ENCODE measurements at regions of chr6 and their contacts with region 1.

Region 1: DNA sequence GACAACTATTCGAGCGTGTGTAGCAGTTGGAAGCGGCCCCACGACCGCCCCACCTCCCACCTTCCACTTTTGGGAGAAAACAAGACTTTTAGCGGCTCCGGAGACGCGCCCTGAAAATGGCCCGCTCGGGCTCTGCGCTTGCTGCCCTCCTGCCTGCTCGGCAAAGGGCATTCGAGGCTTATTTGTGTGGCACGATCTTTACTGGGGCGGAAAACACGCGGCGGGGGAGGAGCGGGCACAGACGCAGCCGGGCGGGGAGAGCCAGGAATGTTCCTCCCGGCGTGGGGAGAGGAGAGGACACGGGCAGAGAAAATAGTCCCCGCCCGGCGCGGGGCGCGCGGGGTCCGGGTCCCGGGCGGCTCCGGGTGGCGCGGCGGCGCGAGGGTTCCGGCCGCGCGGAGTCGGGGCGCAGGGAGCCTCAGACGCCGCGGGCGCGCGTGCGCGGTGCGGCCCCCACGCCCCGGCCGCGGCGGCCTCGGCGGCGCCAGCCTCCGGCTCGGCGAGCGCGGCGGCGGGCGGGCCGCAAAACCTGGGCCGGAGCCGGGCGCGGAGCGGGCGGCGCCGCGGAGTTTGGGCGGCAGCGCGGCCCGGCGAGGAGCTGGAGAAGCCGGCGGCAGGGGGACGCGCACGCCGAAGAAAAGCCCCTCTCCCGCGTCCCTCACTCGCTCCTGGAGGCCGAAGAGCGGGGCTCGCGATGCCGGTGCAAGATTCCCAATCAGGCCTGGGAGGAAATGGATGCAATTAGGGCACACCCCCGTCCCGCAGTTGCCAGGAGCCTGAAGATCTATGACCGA is 90.0 kb upstream of the ARID1B start:
- DNase-seq: peak; percentile 60 to 92 (median 73)
- ATAC-seq: peak; percentile 83
- H3K4me3 ChIP-seq: peak overlapping the region; percentile 92 to 93
- H3K4me3 Mint-ChIP-seq: peak overlapping the region; percentile 89
- H3K27ac ChIP-seq: peak overlapping the region; percentile 89 to 95
- H3K27ac Mint-ChIP-seq: peak overlapping the region; percentile 97
- H3K4me1 ChIP-seq: peaks cover 8% of the 10 kb centered on the region
- H3K4me1 Mint-ChIP-seq: peaks cover 16% of the 10 kb centered on the region
- H3K27me3 ChIP-seq: no peaks in the 10 kb centered on the region
- H3K27me3 Mint-ChIP-seq: peaks cover 6% of the 10 kb centered on the region
- CTCF ChIP-seq: no peak

Region 2: GRCh38 chr6:155314092-155314772 is 1373.0 kb before region 1 on chr6 and contains the start of gene TFB1M:
- CTCF ChIA-PET with region 1: no interaction called
- POLR2A ChIA-PET with region 1: no interaction called
- intact Hi-C with region 1: loop called (anchors 2 to 10 kb)
- DNase-seq: peak; percentile 91 to 99 (median 97)
- ATAC-seq: peak; percentile 93
- H3K4me3 ChIP-seq: peak within 1 kb of the TSS; percentile 92 to 97
- H3K4me3 Mint-ChIP-seq: peak within 1 kb of the TSS; percentile 98
- H3K27ac ChIP-seq: peak within 1 kb of the TSS; percentile 83 to 87
- H3K27ac Mint-ChIP-seq: peak within 1 kb of the TSS; percentile 97
- H3K4me1 ChIP-seq: peaks cover 7% of the 10 kb centered on the region
- H3K4me1 Mint-ChIP-seq: peaks cover 35% of the 10 kb centered on the region
- H3K27me3 ChIP-seq: no peaks in the 10 kb centered on the region
- H3K27me3 Mint-ChIP-seq: no peaks in the 10 kb centered on the region
- CTCF ChIP-seq: no peak
- total RNA-seq, gene TFB1M: 6.3 to 7.9 TPM

Region 3: GRCh38 chr6:156538875-156539660 is 148.1 kb before region 1 on chr6:
- CTCF ChIA-PET with region 1: no interaction called
- POLR2A ChIA-PET with region 1: no interaction called
- intact Hi-C with region 1: no loop called
- DNase-seq: no peak
- ATAC-seq: no peak
- H3K4me3 ChIP-seq: no peak overlapping the region
- H3K4me3 Mint-ChIP-seq: no peak overlapping the region
- H3K27ac ChIP-seq: no peak overlapping the region
- H3K27ac Mint-ChIP-seq: no peak overlapping the region
- H3K4me1 ChIP-seq: no peaks in the 10 kb centered on the region
- H3K4me1 Mint-ChIP-seq: no peaks in the 10 kb centered on the region
- H3K27me3 ChIP-seq: no peaks in the 10 kb centered on the region
- H3K27me3 Mint-ChIP-seq: no peaks in the 10 kb centered on the region
- CTCF ChIP-seq: no peak

Region 4: GRCh38 chr6:156564127-156564806 is 122.9 kb before region 1 on chr6:
- CTCF ChIA-PET with region 1: interaction called, 5 read pairs
- POLR2A ChIA-PET with region 1: no interaction called
- intact Hi-C with region 1: loop called (anchors 1 to 5 kb)
- DNase-seq: peak; percentile 59 to 88 (median 73)
- ATAC-seq: peak; percentile 93
- H3K4me3 ChIP-seq: no peak overlapping the region
- H3K4me3 Mint-ChIP-seq: no peak overlapping the region
- H3K27ac ChIP-seq: no peak overlapping the region
- H3K27ac Mint-ChIP-seq: no peak overlapping the region
- H3K4me1 ChIP-seq: no peaks in the 10 kb centered on the region
- H3K4me1 Mint-ChIP-seq: no peaks in the 10 kb centered on the region
- H3K27me3 ChIP-seq: peaks cover 0 to 3% of the 10 kb centered on the region in 2 experiments
- H3K27me3 Mint-ChIP-seq: peaks cover 6% of the 10 kb centered on the region
- CTCF ChIP-seq: peak; percentile 89

Region 5: GRCh38 chr6:156735751-156736150 is 48.6 kb after region 1 on chr6:
- CTCF ChIA-PET with region 1: no interaction called
- POLR2A ChIA-PET with region 1: no interaction called
- intact Hi-C with region 1: loop called in 1 of 2 experiments (anchors 5 kb)
- DNase-seq: no peak
- ATAC-seq: no peak
- H3K4me3 ChIP-seq: no peak overlapping the region
- H3K4me3 Mint-ChIP-seq: no peak overlapping the region
- H3K27ac ChIP-seq: no peak overlapping the region
- H3K27ac Mint-ChIP-seq: no peak overlapping the region
- H3K4me1 ChIP-seq: no peaks in the 10 kb centered on the region
- H3K4me1 Mint-ChIP-seq: no peaks in the 10 kb centered on the region
- H3K27me3 ChIP-seq: no peaks in the 10 kb centered on the region
- H3K27me3 Mint-ChIP-seq: no peaks in the 10 kb centered on the region
- CTCF ChIP-seq: no peak

Region 6: DNA sequence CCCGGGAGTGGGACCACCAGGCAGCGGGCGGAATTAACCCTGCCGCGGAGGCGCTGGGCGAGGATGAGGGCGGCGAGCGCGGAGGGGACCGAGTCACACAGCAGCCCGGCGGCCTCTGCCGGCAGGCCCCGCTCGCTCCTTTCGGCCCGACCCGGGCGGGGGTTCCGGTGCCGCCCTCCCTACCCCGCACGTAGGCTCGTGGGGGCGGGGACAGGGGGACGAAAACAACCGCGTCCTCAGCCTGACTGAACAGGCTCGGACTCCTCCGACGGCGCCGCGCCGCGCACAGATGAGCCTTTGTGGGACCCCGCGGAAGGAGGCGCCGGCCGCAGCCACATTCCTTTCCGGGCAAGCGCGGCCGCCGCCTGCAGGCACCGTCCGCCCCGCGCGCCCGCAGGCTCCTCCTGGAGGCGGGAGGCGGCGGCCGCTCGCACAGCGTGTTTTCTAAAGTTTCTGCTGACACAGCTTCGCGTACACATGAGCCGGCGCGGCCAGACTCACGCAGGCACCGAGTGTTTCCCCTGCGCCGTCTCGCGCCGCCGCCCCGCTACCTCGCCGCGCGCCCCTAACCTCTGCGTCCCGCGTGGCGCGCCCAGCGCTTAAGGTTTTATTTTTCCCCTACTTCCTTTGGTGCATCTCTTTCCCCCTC is 334.3 kb after region 1 on chr6:
- CTCF ChIA-PET with region 1: no interaction called
- POLR2A ChIA-PET with region 1: interaction called, 11 read pairs
- intact Hi-C with region 1: loop called (anchors 1 to 2 kb)
- DNase-seq: peak; percentile 75 to 93 (median 89)
- ATAC-seq: peak; percentile 75
- H3K4me3 ChIP-seq: peak overlapping the region; percentile 66 to 93
- H3K4me3 Mint-ChIP-seq: peak overlapping the region; percentile 95
- H3K27ac ChIP-seq: peak overlapping the region; percentile 96 to 98
- H3K27ac Mint-ChIP-seq: peak overlapping the region; percentile 100
- H3K4me1 ChIP-seq: peaks cover 8% of the 10 kb centered on the region
- H3K4me1 Mint-ChIP-seq: peaks cover 59% of the 10 kb centered on the region
- H3K27me3 ChIP-seq: no peaks in the 10 kb centered on the region
- H3K27me3 Mint-ChIP-seq: no peaks in the 10 kb centered on the region
- CTCF ChIP-seq: no peak

Region 7: GRCh38 chr6:157274471-157275226 is 587.5 kb after region 1 on chr6:
- CTCF ChIA-PET with region 1: no interaction called
- POLR2A ChIA-PET with region 1: no interaction called
- intact Hi-C with region 1: loop called (anchors 2 kb)
- DNase-seq: peak; percentile 70 to 95 (median 85)
- ATAC-seq: peak; percentile 79
- H3K4me3 ChIP-seq: peak overlapping the region; percentile 71 to 81
- H3K4me3 Mint-ChIP-seq: peak overlapping the region; percentile 91
- H3K27ac ChIP-seq: peak overlapping the region; percentile 82 to 91
- H3K27ac Mint-ChIP-seq: peak overlapping the region; percentile 96
- H3K4me1 ChIP-seq: peaks cover 11% of the 10 kb centered on the region
- H3K4me1 Mint-ChIP-seq: peaks cover 7% of the 10 kb centered on the region
- H3K27me3 ChIP-seq: no peaks in the 10 kb centered on the region
- H3K27me3 Mint-ChIP-seq: no peaks in the 10 kb centered on the region
- CTCF ChIP-seq: peak; percentile 76